ENCODE measurements at regions of chr7 and their contacts with region 1.

Region 1: GRCh38 chr7:106346678-106347217 is 62.0 kb upstream of the NAMPT start:
- DNase-seq: peak; percentile 94
- H3K4me3 ChIP-seq: no peak overlapping the region
- H3K27ac ChIP-seq: peak overlapping the region; percentile 66
- H3K4me1 ChIP-seq: peaks cover 20% of the 10 kb centered on the region
- H3K27me3 ChIP-seq: no peaks in the 10 kb centered on the region
- CTCF ChIP-seq: no peak

Region 2: DNA sequence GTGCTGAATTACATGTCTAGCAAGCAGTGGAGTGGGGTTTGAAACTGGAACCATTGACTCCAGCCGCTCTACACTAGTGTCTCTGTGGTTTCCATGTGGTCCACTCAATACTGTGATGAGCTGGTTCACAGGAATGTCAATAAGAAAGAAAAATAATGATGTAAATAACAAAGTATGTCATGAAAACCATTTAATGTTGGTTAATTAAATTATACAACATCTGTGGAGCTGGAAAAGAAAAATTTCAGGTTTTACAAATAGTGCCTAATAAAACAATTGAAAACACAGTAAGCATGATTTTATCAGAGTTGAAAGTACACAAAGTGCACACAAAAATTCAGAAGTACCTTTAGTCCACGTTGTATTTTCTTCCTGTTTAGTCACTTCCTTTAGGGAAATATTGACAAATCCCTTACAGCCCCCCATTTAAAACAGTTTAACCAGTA is 33.3 kb before region 1 on chr7:
- CTCF ChIA-PET with region 1: no interaction called
- dilution Hi-C with region 1: no loop called
- in situ Hi-C with region 1: no loop called
- intact Hi-C with region 1: loop called (anchors 2 kb)
- DNase-seq: peak; percentile 78
- H3K4me3 ChIP-seq: no peak overlapping the region
- H3K27ac ChIP-seq: peak overlapping the region; percentile 50
- H3K4me1 ChIP-seq: peaks cover 34% of the 10 kb centered on the region
- H3K27me3 ChIP-seq: no peaks in the 10 kb centered on the region
- CTCF ChIP-seq: no peak

Region 3: DNA sequence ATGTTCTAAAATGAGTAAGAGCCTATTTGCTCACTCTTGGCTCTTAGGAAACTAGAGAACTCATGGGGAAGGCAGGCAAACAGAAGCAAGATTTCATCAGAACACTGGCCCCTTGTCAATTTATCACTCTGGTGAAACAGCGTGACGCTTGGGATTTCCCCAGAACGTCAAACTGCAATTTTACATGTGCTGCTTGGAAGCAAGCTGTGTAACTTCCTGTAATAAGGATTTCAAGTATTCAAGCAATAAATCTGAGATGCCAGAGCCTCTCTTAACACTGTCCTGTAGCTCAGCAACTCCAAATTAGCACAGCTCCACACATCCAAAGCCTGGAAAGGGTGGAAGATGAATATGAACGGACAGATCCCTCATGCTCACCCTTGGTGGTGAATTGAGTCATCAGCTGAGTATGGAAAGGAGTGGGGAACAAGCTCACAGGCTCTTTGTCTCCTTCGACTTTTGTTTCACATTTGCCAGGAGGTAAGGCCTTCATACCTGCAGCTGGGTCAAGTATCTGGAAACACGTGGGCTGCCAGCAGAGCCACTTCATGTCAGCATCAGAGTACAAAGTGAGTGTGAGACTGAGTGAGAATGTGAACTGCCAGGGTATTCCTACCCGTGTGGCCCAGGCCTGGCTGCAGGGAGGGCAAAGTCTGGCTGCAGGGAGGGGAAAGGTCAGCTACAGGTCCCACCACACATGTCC is 78.4 kb after region 1 on chr7:
- CTCF ChIA-PET with region 1: no interaction called
- dilution Hi-C with region 1: no loop called
- in situ Hi-C with region 1: no loop called
- intact Hi-C with region 1: loop called (anchors 1 kb)
- DNase-seq: peak; percentile 99
- H3K4me3 ChIP-seq: peak overlapping the region in 1 of 3 experiments; percentile 23
- H3K27ac ChIP-seq: peak overlapping the region; percentile 99
- H3K4me1 ChIP-seq: peaks cover 45% of the 10 kb centered on the region
- H3K27me3 ChIP-seq: no peaks in the 10 kb centered on the region
- CTCF ChIP-seq: no peak

Region 4: GRCh38 chr7:107007007-107007891 is 660.5 kb after region 1 on chr7:
- CTCF ChIA-PET with region 1: no interaction called
- dilution Hi-C with region 1: no loop called
- in situ Hi-C with region 1: no loop called
- intact Hi-C with region 1: no loop called
- DNase-seq: no peak
- H3K4me3 ChIP-seq: no peak overlapping the region
- H3K27ac ChIP-seq: no peak overlapping the region
- H3K4me1 ChIP-seq: no peaks in the 10 kb centered on the region
- H3K27me3 ChIP-seq: no peaks in the 10 kb centered on the region
- CTCF ChIP-seq: no peak

Measured in mammary epithelial cell (primary cell).